Posterior vena cava (tissue), 2 donors: ENCODE measurements at regions of chr13 and their contacts with region 1.

Region 1: DNA sequence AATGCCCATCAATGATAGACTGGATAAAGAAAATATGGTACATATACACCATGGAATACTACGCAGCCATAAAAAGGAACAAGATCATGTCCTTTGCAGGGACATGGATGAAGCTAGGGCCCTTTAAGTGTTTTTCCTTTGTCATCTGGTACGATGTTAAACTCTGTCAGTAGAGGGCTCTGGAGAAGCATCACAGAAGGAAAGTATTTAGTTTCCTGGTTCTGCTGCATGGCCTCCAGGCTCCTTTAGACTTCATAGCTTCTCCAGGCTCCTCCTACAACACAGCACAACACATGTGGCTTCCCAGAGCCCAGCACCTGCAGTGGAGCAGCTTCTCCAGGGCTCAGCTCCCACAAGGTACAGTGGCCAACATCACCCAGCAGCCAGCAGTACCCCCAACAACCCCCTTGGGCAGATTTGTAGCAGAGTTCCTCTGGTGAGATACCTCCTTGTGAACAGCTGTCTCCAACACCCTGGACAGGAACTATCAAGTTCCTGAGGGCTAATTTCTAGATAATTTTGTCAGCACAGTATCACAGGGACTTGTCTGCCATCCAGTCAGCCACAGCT is 63.4 kb downstream of the KCTD12 start:
- DNase-seq: peak; percentile 64

Region 2: GRCh38 chr13:76756451-76756850 is 66.3 kb before region 1 on chr13:
- intact Hi-C with region 1: loop called in 1 of 2 experiments (anchors 2 kb)
- DNase-seq: no peak

Region 3: DNA sequence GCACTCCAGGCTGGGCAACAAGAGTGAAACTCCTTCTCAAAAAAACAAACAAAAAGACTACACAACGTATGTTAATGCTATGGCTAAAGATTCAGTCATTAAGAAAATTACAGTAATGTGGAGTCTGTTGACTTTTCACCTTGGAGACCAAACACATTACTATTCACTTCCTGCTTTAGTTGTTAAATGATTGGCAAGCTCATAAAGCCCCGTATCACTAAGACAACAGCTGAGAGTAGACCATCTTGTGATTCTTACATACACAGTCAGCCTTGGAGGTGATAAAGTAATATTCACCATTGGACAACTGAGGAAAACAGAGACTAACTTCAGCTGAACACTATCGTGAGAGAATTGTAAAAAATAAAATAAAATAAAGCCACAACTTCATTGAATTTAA is 23.1 kb before region 1 on chr13:
- intact Hi-C with region 1: loop called in 1 of 2 experiments (anchors 2 kb)
- DNase-seq: no peak

Region 4: DNA sequence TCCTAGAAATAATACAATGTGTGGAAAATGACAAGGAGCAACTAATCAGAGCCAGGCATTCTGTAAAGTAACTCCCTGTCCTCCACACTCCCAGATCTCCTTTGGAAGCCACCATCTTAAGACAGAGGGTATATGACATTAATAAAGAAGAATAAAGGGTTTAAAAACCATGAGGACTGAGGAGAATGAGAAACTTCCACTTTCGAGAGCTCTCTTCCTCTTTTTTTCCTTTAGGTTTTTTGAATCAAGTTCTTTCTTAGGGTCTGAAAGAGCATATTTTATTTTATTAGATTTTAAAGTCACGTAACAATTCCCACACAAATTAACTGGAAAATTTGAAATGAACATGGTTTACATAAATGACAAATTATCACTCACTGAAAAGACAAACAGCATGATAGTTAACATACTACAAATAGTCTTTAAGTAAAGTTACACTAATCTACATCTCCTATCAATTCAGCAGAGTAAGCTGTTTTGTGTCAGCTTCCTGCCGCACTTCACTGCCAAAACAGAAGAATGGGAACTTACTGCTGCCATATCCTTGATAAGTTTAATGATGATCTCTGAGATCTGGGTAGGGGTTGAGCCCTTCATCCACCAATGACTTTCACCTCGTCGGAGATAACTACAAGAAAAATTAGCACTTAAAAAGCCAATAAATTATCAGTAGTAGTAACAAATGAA is 242.8 kb after region 1 on chr13:
- intact Hi-C with region 1: no loop called
- DNase-seq: no peak

Region 5: GRCh38 chr13:78499802-78500201 is 1677.0 kb after region 1 on chr13:
- intact Hi-C with region 1: no loop called
- DNase-seq: no peak